Naive thymus-derived CD4-positive, alpha-beta T cell (primary cell): ENCODE measurements at regions of chr12 and their contacts with region 1.

Region 1: GRCh38 chr12:56189176-56189917 is at the start of gene SMARCC2:
- DNase-seq: peak; percentile 78 to 93 (median 82)
- ATAC-seq: peak; percentile 93
- H3K4me3 ChIP-seq: peak within 1 kb of the TSS; percentile 91
- H3K4me3 Mint-ChIP-seq: peak within 1 kb of the TSS; percentile 76 to 98 (median 95)
- H3K27ac ChIP-seq: peak within 1 kb of the TSS; percentile 92
- H3K27ac Mint-ChIP-seq: peak within 1 kb of the TSS; percentile 93 to 99 (median 98)
- H3K4me1 ChIP-seq: peaks cover 9 to 19% of the 10 kb centered on the region in 2 donors
- H3K4me1 Mint-ChIP-seq: peaks cover 37 to 55% (median 49%) of the 10 kb centered on the region in 7 donors
- H3K27me3 ChIP-seq: no peaks in the 10 kb centered on the region
- H3K27me3 Mint-ChIP-seq: peaks cover 0 to 4% (median 0%) of the 10 kb centered on the region in 5 donors
- total RNA-seq, gene SMARCC2: 118 to 187 (median 149) TPM

Region 2: DNA sequence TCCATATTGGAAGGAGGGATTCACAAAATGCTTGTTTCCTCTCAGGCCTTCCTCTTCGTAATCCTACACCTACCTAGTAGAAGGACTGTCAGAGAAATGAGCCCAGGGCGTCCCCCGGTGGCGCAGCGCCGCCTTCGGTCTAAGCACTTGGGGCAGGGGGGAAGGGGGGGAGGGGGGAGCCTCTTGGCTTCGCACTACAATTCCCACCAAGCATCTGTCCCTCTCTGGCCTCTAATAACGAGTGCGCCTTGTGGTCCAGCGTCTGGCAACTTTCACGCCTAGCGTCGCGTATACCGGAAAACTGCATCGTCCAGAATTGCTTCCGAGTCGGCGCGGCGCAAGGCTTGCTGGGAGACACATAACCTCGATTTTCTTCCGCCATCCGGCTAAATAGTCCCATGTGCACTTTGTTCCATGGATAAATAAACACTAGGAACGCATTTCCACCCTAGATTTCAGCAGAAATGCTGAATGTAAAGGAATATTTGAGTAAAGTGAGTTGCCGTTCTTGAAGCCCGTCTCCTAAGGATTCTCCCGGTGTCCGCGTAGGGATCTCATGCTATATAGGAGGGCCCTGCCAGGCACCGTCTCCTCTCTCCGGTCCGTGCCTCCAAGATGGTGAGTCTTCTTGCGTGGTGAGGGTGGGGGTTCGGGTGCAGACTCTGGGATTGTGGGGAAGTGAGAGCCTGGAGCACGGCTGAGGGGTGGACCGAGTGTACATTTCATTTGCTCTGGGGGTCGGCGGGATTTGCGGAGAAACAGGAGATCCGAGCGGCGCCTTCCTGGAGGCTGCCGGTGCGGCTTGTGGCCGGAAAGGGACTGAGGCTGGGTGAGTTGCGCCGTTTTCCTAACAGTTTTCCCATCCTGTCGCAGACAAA is 147.6 kb before region 1 on chr12 and contains the start of gene RPS26:
- CTCF ChIA-PET with region 1: interaction called, 5 read pairs
- POLR2A ChIA-PET with region 1: interaction called, 12 read pairs
- intact Hi-C with region 1: loop called in 1 of 2 experiments (anchors 10 kb)
- DNase-seq: peak; percentile 75 to 97 (median 94)
- ATAC-seq: peak; percentile 94
- H3K4me3 ChIP-seq: peak within 1 kb of the TSS; percentile 100
- H3K4me3 Mint-ChIP-seq: peak within 1 kb of the TSS; percentile 91 to 100 (median 98)
- H3K27ac ChIP-seq: peak within 1 kb of the TSS; percentile 84
- H3K27ac Mint-ChIP-seq: peak within 1 kb of the TSS; percentile 94 to 99 (median 97)
- H3K4me1 ChIP-seq: peaks cover 16 to 19% of the 10 kb centered on the region in 2 donors
- H3K4me1 Mint-ChIP-seq: peaks cover 14 to 56% (median 34%) of the 10 kb centered on the region in 7 donors
- H3K27me3 ChIP-seq: no peaks in the 10 kb centered on the region
- H3K27me3 Mint-ChIP-seq: no peaks in the 10 kb centered on the region
- total RNA-seq, gene RPS26: 40.8 to 64.5 (median 46.4) TPM

Region 3: DNA sequence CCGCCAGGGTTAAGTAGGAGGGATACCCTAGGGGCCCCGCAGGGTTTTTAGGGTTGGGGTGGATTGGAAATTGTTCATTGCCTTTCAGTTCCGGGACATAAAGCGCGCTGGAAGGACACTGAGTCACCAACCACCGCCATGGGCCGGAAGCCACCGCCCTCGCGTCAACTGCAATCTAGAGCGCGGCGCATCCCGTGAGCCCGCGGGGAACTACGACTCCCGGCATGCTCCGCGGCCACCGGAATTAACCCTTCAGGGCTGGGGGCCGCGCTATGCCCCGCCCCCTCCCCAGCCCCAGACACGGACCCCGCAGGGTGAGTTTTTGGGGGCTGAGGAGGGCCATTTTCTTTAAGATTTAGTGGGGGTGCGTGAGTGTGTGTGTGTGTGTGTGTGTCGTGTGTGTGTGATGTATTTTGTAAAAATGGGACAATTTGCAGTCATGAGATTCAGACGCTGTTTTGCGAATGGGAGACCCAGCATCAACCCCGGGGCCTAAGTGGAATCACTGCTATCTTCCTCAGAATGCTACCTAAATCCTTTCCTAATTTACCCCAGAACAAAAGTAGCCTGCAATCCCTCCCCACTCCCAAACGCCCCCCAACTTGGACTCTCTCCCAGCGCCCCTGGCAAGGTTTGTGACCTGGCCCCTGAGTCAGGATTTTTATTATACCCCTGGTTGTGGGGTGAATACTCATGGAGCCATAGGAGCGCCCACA is 36.9 kb before region 1 on chr12 and contains the start of gene MYL6B:
- CTCF ChIA-PET with region 1: interaction called, 7 read pairs
- POLR2A ChIA-PET with region 1: interaction called, 47 read pairs
- intact Hi-C with region 1: loop called in 1 of 2 experiments (anchors 1 kb)
- DNase-seq: peak; percentile 79 to 94 (median 87)
- ATAC-seq: peak; percentile 98
- H3K4me3 ChIP-seq: peak within 1 kb of the TSS; percentile 86
- H3K4me3 Mint-ChIP-seq: peak within 1 kb of the TSS; percentile 80 to 96 (median 92)
- H3K27ac ChIP-seq: peak within 1 kb of the TSS; percentile 80
- H3K27ac Mint-ChIP-seq: peak within 1 kb of the TSS; percentile 84 to 99 (median 97)
- H3K4me1 ChIP-seq: peaks cover 22 to 25% of the 10 kb centered on the region in 2 donors
- H3K4me1 Mint-ChIP-seq: peaks cover 17 to 55% (median 39%) of the 10 kb centered on the region in 7 donors
- H3K27me3 ChIP-seq: no peaks in the 10 kb centered on the region
- H3K27me3 Mint-ChIP-seq: no peaks in the 10 kb centered on the region
- total RNA-seq, gene MYL6B: 3.7 to 60.3 (median 8.9) TPM

Region 4: GRCh38 chr12:56178347-56178746 is 11.0 kb before region 1 on chr12:
- CTCF ChIA-PET with region 1: interaction called, 3 read pairs
- POLR2A ChIA-PET with region 1: interaction called, 11 read pairs
- intact Hi-C with region 1: no loop called
- DNase-seq: no peak
- ATAC-seq: peak; percentile 18
- H3K4me3 ChIP-seq: no peak overlapping the region
- H3K4me3 Mint-ChIP-seq: no peak overlapping the region
- H3K27ac ChIP-seq: no peak overlapping the region
- H3K27ac Mint-ChIP-seq: peak overlapping the region in 4 of 9 donors; percentile 9 to 72 (median 34)
- H3K4me1 ChIP-seq: no peaks in the 10 kb centered on the region
- H3K4me1 Mint-ChIP-seq: peaks cover 0 to 6% (median 0%) of the 10 kb centered on the region in 7 donors
- H3K27me3 ChIP-seq: no peaks in the 10 kb centered on the region
- H3K27me3 Mint-ChIP-seq: no peaks in the 10 kb centered on the region

Region 5: GRCh38 chr12:56266693-56267442 is 77.5 kb after region 1 on chr12 and contains the start of gene COQ10A:
- CTCF ChIA-PET with region 1: interaction called, 6 read pairs
- POLR2A ChIA-PET with region 1: no interaction called
- intact Hi-C with region 1: loop called (anchors 2 kb)
- DNase-seq: peak; percentile 78 to 92 (median 89)
- ATAC-seq: peak; percentile 93
- H3K4me3 ChIP-seq: peak within 1 kb of the TSS; percentile 88
- H3K4me3 Mint-ChIP-seq: peak within 1 kb of the TSS; percentile 83 to 100 (median 96)
- H3K27ac ChIP-seq: peak within 1 kb of the TSS; percentile 94
- H3K27ac Mint-ChIP-seq: peak within 1 kb of the TSS; percentile 89 to 97 (median 94)
- H3K4me1 ChIP-seq: peaks cover 0 to 8% of the 10 kb centered on the region in 2 donors
- H3K4me1 Mint-ChIP-seq: peaks cover 0 to 22% (median 20%) of the 10 kb centered on the region in 7 donors
- H3K27me3 ChIP-seq: no peaks in the 10 kb centered on the region
- H3K27me3 Mint-ChIP-seq: peaks cover 0 to 2% (median 0%) of the 10 kb centered on the region in 5 donors
- total RNA-seq, gene COQ10A: 22.5 to 39.4 (median 31.5) TPM

Region 6: DNA sequence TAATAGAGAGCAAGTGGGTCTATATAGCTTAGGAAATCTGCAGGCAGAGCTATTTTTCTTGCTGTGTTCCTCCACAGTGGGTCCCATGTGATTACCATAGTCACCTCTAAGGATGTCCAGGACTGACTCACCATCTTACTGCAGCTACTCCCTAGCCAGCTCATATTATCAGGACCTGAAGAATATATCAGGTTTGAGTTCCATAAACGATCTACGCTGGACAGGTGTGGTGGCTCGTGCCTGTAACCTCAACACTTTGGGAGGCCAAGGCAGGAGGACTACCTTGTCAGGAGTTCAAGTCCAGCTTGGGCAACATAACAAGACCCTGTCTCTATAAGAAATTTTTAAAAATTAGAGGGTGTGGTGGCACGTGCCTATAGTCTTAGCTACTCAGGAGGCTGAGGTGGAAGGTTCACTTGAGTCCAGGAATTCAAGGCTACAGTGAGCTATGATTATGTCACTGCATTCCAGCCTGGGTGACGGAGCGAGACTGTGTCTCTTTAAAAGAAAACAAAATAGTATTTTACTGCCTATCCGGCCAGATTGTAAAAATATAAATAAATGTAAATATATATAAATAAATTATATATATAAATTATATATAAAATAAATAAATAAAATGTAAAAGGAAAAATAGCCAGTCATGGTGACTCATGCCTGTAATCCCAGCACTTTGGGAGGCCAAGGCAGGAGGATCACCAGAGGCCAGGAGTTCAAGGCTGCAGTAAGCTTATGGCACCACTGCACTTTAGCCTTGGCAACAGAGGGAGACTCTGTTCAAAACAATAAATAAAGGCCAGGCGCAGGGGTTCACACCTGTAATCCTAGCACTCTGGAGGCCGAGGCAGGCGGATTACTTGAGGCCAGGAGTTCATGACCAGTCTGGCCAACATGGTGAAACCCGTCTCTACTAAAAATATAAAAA is 272.1 kb after region 1 on chr12:
- CTCF ChIA-PET with region 1: interaction called, 20 read pairs
- POLR2A ChIA-PET with region 1: interaction called, 7 read pairs
- intact Hi-C with region 1: loop called (anchors 1 kb)
- DNase-seq: no peak
- ATAC-seq: no peak
- H3K4me3 ChIP-seq: no peak overlapping the region
- H3K4me3 Mint-ChIP-seq: no peak overlapping the region
- H3K27ac ChIP-seq: no peak overlapping the region
- H3K27ac Mint-ChIP-seq: no peak overlapping the region
- H3K4me1 ChIP-seq: peaks cover 0 to 6% of the 10 kb centered on the region in 2 donors
- H3K4me1 Mint-ChIP-seq: peaks cover 0 to 10% (median 5%) of the 10 kb centered on the region in 7 donors
- H3K27me3 ChIP-seq: no peaks in the 10 kb centered on the region
- H3K27me3 Mint-ChIP-seq: no peaks in the 10 kb centered on the region

Region 7: GRCh38 chr12:56571126-56571525 is 381.8 kb after region 1 on chr12:
- CTCF ChIA-PET with region 1: no interaction called
- POLR2A ChIA-PET with region 1: no interaction called
- intact Hi-C with region 1: loop called in 1 of 2 experiments (anchors 10 kb)
- DNase-seq: no peak
- ATAC-seq: no peak
- H3K4me3 ChIP-seq: no peak overlapping the region
- H3K4me3 Mint-ChIP-seq: peak overlapping the region in 2 of 10 donors; percentile 23 to 49
- H3K27ac ChIP-seq: no peak overlapping the region
- H3K27ac Mint-ChIP-seq: peak overlapping the region in 3 of 9 donors; percentile 15 to 67 (median 28)
- H3K4me1 ChIP-seq: peaks cover 0 to 22% of the 10 kb centered on the region in 2 donors
- H3K4me1 Mint-ChIP-seq: peaks cover 9 to 31% (median 23%) of the 10 kb centered on the region in 7 donors
- H3K27me3 ChIP-seq: no peaks in the 10 kb centered on the region
- H3K27me3 Mint-ChIP-seq: no peaks in the 10 kb centered on the region